ENCODE measurements at regions of chr1 and their contacts with region 1.

Region 1: GRCh38 chr1:43227143-43227764 is 42.5 kb upstream of the TMEM125 start:
- DNase-seq: peak; percentile 36
- H3K4me3 ChIP-seq: no peak overlapping the region
- H3K27ac ChIP-seq: no peak overlapping the region
- H3K27me3 ChIP-seq: no peaks in the 10 kb centered on the region
- CTCF ChIP-seq: peak; percentile 93

Region 2: DNA sequence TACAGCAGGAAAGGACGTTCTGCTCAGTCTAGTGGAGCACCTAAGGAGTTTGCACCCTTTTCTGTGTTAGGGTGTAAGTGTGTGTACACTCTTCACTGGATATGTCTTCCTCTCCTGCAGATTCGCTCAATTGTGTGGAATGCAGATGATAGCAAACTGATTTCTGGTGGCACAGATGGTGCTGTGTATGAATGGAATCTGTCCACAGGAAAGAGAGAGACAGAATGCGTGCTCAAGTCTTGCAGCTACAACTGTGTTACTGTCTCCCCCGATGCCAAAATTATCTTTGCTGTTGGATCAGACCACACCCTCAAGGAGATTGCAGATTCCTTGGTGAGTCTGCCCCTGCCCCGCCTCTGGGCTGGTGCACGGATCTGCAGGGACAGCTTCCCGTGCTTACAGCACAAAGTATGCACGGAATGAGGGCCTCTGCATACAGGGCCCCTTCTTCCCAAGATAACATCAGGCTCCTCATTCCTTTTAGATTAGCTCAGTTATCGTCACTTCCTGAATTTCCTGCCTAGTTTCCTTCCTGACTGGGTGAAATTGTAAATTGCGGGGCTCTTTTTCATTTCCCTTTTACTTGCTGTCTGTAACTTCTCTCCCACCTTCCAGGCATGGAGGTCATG is 20.5 kb before region 1 on chr1:
- CTCF ChIA-PET with region 1: interaction called, 11 read pairs
- POLR2A ChIA-PET with region 1: interaction called, 4 read pairs
- DNase-seq: peak; percentile 93
- H3K4me3 ChIP-seq: peak overlapping the region; percentile 38
- H3K27ac ChIP-seq: peak overlapping the region; percentile 97
- H3K27me3 ChIP-seq: no peaks in the 10 kb centered on the region
- CTCF ChIP-seq: no peak

Region 3: DNA sequence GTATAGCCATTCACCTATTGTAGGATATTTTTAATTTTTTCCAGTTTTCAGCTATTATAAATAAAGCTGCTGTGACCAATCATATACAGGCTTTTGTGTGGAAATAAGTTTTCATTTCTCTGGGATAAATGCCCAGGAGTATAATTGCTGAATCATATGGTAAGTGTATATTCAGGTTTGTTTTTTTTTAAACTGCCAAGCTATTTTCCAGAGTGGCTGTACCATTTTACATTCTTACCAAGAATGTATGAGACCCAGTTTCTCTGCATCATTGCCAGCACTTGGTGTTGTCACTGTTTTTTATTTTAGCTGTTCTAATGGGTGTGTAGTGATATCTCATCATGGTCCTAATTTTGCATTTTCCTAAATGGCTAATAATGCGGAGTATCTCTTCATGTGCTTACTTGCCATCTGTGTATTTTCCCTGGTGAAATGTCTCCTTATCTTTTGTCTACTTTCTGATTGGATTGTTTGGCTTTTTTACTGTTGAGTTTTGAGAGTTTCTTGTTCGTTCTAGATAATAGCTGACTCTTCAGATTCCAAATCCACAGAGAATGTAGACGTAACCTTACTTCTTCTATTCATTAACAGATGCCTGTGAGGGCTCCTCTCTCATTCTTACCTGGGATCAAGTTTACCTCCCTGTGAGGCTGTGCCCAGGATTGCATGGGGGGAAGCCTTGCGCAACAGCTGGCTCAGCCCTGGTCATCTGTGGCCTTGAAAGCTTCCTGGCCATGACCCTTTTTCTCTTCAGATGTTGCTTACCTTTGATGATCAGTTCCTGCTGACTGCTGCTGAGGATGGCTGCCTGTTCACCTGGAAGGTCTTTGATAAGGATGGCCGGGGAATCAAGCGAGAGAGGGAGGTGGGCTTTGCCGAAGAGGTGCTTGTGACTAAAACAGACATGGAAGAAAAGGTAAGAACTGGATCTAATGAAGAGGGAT is 12.5 kb before region 1 on chr1:
- CTCF ChIA-PET with region 1: interaction called, 13 read pairs
- POLR2A ChIA-PET with region 1: interaction called, 4 read pairs
- DNase-seq: peak; percentile 8
- H3K4me3 ChIP-seq: no peak overlapping the region
- H3K27ac ChIP-seq: no peak overlapping the region
- H3K27me3 ChIP-seq: no peaks in the 10 kb centered on the region
- CTCF ChIP-seq: no peak

Region 4: DNA sequence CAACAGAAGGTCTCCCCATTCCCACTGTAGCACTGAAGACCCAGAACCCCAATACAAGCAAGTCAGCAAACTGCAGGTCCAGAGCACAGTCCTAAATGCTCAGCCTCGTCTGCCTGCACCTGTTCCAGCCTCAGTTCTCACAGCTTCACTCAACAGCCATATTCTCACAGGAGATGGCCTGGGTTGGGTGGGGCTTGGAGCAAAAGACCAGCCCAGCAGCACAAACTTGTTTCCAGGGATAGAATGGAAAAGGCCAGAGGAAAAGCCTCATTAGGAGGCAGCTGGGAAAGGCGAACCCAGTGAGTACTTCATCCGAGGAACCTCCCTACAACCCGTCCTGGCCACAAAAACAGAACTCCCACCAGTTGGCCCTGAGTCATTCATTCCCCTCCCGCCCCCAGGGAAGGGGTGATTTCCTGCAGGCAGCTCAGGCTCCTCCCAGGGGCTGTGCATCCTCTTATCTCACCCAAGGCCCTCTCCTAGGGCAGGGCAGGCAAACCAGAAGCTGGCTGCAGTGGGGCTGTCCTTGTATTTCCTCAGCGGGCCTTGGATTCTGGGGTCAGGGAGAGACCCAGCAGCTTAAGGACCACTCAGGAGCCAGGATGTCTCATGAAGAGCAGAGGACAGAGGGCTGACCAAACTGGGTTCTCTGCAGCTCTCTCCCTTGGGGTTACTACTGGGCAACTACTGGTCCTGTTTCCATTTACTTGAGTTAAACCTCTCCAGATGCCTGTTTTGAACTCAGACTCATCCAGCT is 102.9 kb after region 1 on chr1:
- CTCF ChIA-PET with region 1: no interaction called
- POLR2A ChIA-PET with region 1: no interaction called
- DNase-seq: peak; percentile 39
- H3K4me3 ChIP-seq: no peak overlapping the region
- H3K27ac ChIP-seq: peak overlapping the region; percentile 61
- H3K27me3 ChIP-seq: no peaks in the 10 kb centered on the region
- CTCF ChIP-seq: no peak

Region 5: GRCh38 chr1:43358746-43359693 is 131.8 kb after region 1 on chr1 and contains the start of gene CDC20:
- CTCF ChIA-PET with region 1: interaction called, 15 read pairs
- POLR2A ChIA-PET with region 1: interaction called, 5 read pairs
- DNase-seq: peak; percentile 82
- H3K4me3 ChIP-seq: peak within 1 kb of the TSS; percentile 73
- H3K27ac ChIP-seq: peak within 1 kb of the TSS; percentile 83
- H3K27me3 ChIP-seq: no peaks in the 10 kb centered on the region
- CTCF ChIP-seq: no peak
- polyA plus RNA-seq, gene CDC20: 22.8 and 27.5 TPM in 2 replicates

Region 6: GRCh38 chr1:43389326-43390313 is 162.4 kb after region 1 on chr1 and contains the starts of genes MED8 and SZT2:
- CTCF ChIA-PET with region 1: interaction called, 16 read pairs
- POLR2A ChIA-PET with region 1: interaction called, 5 read pairs
- DNase-seq: peak; percentile 79
- H3K4me3 ChIP-seq: peak within 1 kb of the TSS; percentile 100
- H3K27ac ChIP-seq: peak within 1 kb of the TSS; percentile 81
- H3K27me3 ChIP-seq: no peaks in the 10 kb centered on the region
- CTCF ChIP-seq: no peak
- polyA plus RNA-seq, gene MED8: 59.3 and 63.7 TPM in 2 replicates
- polyA plus RNA-seq, gene SZT2: 9.4 and 10.4 TPM in 2 replicates

Region 7: DNA sequence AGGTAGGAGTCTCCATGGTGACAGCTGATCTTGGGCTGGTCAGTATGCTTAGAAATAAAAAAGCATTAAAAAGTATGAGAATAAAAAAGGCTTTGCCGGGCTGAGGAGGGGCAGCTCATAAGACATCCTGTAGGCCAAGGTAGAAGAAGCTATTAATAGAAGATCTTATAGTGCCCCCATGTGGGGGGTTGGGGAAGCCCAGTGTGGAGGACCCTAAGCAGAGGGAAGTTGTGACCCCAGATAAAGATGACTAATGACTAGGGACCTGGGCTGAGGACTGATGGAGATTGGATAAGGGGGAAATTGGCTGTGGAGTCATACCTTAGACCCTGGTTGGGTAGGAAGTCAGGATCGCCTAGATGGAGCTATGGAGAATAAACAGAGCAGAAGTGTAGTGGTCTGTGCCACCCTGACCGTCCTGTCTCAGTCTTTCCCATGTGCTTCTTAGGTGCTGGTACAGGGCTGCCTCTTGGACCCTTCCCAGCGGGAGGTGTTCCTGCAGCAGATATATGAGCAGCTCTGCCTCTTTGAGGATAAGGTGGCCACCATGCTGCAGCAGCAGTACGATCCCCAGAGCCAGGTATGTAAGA is 187.5 kb after region 1 on chr1:
- CTCF ChIA-PET with region 1: interaction called, 141 read pairs
- POLR2A ChIA-PET with region 1: no interaction called
- DNase-seq: no peak
- H3K4me3 ChIP-seq: no peak overlapping the region
- H3K27ac ChIP-seq: no peak overlapping the region
- H3K27me3 ChIP-seq: no peaks in the 10 kb centered on the region
- CTCF ChIP-seq: peak; percentile 68

Measured in AG04450 (cell line).